ENCODE measurements at regions of chr5 and their contacts with region 1.

Region 1: DNA sequence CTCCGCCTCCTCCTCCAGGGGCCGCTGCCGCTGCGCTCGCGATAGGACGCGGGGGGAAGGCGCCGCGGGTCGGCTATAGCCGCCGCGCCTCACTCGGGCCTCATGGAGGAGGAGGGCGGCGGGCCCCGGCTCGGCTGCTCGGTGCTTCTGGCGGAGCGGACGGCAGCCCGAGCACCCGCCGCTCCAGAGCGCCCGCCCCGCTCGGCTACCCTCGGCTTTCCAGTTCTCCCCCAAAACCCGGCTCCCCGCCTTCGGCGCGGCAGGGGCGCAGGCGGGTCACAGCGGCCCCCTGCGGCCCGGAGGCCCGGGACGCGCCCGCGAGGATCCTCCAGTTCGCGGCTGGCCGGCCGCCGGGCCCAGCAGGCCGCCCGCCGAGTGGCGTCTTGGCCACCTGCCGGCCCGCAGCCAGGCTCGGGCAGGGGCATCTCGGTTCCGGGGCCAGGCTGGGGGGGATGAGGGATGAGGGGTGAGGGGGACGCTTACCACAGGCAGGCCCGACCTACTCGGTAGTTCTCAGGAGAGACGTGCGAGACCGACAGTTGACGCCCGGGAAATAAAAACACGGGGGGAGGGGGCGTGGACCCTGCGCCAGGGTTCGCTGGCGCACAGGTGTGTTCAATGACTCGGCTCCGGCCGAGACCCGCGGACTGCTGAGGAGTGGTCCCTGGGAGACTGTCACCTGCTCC is at the start of gene PAIP1:
- DNase-seq: peak; percentile 85 to 92
- ATAC-seq: peak; percentile 91 to 94 (median 93)
- H3K4me3 ChIP-seq: peak within 1 kb of the TSS; percentile 93
- H3K27ac ChIP-seq: peak within 1 kb of the TSS; percentile 98
- H3K4me1 ChIP-seq: peaks cover 37% of the 10 kb centered on the region
- H3K27me3 ChIP-seq: no peaks in the 10 kb centered on the region
- CTCF ChIP-seq: peak; percentile 61
- total RNA-seq, gene PAIP1: 125 to 143 (median 142) TPM

Region 2: GRCh38 chr5:42404366-42404765 is 1152.6 kb before region 1 on chr5:
- intact Hi-C with region 1: no loop called
- DNase-seq: no peak
- ATAC-seq: no peak
- H3K4me3 ChIP-seq: no peak overlapping the region
- H3K27ac ChIP-seq: no peak overlapping the region
- H3K4me1 ChIP-seq: no peaks in the 10 kb centered on the region
- H3K27me3 ChIP-seq: no peaks in the 10 kb centered on the region
- CTCF ChIP-seq: no peak

Region 3: DNA sequence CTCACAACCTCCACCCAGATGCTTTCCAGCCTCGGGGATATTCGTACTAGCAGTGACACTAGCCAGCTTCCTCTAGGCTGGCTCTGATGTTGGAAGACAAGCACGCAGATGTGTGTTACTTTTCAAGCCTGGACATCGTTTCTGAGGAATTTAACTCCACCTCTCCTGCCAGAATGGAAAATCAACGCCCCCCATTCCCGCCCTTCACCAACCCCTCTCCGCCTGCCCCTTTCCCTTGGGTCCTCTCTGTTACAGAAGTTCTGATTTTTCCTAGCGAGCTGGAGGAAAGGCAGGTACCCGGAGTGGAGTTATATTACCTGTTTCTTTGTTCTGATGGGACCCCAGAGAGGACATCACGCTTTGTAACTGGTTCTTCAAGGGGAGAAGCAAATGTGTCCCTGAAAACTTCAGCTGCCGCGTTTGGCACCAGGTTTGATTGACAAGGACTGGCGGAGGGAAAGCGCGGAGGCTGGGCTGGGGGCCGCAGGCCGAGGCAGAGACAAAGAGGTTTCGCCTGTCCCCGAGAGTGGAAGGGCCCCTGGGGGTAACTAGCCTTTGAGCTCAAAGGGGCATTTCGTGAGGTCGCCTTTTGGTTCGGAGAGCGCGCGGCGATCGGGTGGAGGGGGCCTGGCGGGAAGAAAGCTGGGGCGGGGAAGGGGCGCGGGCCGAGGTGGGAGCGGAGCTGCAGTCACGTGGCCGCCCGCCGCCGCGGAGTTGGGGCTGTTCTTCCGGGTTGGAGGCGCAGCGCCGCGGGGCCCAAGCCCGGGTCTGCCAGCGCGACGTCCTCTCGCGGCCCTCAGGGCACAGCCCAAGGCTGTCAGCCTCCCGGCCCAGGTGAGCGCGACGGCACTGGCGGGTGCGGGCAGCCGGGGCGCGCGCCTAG is 45.7 kb after region 1 on chr5 and contains the start of gene NNT:
- intact Hi-C with region 1: loop called (anchors 2 kb)
- DNase-seq: peak; percentile 79 to 87
- ATAC-seq: peak; percentile 65 to 71 (median 68)
- H3K4me3 ChIP-seq: peak within 1 kb of the TSS; percentile 89
- H3K27ac ChIP-seq: peak within 1 kb of the TSS; percentile 98
- H3K4me1 ChIP-seq: peaks cover 40% of the 10 kb centered on the region
- H3K27me3 ChIP-seq: no peaks in the 10 kb centered on the region
- CTCF ChIP-seq: no peak
- total RNA-seq, gene NNT: 216 to 442 (median 312) TPM

Region 4: GRCh38 chr5:43702815-43703214 is 145.8 kb after region 1 on chr5:
- intact Hi-C with region 1: no loop called
- DNase-seq: no peak
- ATAC-seq: peak in 1 of 4 donors; percentile 28
- H3K4me3 ChIP-seq: no peak overlapping the region
- H3K27ac ChIP-seq: no peak overlapping the region
- H3K4me1 ChIP-seq: peaks cover 6% of the 10 kb centered on the region
- H3K27me3 ChIP-seq: no peaks in the 10 kb centered on the region
- CTCF ChIP-seq: no peak

Measured in psoas muscle (tissue), 8 donors.